Prostate gland (tissue), 2 donors: ENCODE measurements at regions of chr5 and their contacts with region 1.

Region 1: GRCh38 chr5:180209137-180209581 is at the start of gene RASGEF1C:
- DNase-seq: peak; percentile 44
- H3K4me3 ChIP-seq: peak within 1 kb of the TSS; percentile 20 to 31
- H3K27ac ChIP-seq: no peak within 1 kb of the TSS
- H3K4me1 ChIP-seq: no peaks in the 10 kb centered on the region
- H3K27me3 ChIP-seq: no peaks in the 10 kb centered on the region
- CTCF ChIP-seq: peak in 2 of 4 experiments; percentile 45 to 62
- POLR2A ChIP-seq: no peak
- total RNA-seq, gene RASGEF1C: 0.09 to 3.1 TPM

Region 2: GRCh38 chr5:180127682-180128675 is 81.2 kb before region 1 on chr5:
- intact Hi-C with region 1: loop called (anchors 2 kb)
- DNase-seq: peak; percentile 3
- H3K4me3 ChIP-seq: no peak overlapping the region
- H3K27ac ChIP-seq: no peak overlapping the region
- H3K4me1 ChIP-seq: no peaks in the 10 kb centered on the region
- H3K27me3 ChIP-seq: no peaks in the 10 kb centered on the region
- CTCF ChIP-seq: no peak
- POLR2A ChIP-seq: no peak

Region 3: DNA sequence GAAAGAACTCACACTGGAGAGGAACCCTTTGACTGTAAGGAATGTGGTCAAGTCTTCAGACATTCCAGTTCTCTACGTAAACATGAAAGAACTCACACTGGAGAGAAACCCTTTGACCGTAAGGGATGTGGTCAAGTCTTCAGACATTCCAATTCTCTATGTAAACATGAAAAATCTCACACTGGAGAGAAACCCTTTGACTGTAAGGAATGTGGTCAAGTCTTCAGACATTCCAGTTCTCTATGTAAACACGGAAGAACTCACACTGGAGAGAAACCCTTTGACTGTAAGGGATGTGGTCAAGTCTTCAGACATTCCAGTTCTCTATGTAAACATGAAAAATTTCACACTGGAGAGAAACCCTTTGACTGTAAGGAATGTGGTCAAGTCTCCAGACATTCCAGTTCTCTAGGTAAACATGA is 50.1 kb after region 1 on chr5:
- intact Hi-C with region 1: no loop called
- DNase-seq: no peak
- H3K4me3 ChIP-seq: no peak overlapping the region
- H3K27ac ChIP-seq: no peak overlapping the region
- H3K4me1 ChIP-seq: no peaks in the 10 kb centered on the region
- H3K27me3 ChIP-seq: no peaks in the 10 kb centered on the region
- CTCF ChIP-seq: no peak
- POLR2A ChIP-seq: no peak